Heart right ventricle (tissue), 16 donors: ENCODE measurements at regions of chr12 and their contacts with region 1.

Region 1: DNA sequence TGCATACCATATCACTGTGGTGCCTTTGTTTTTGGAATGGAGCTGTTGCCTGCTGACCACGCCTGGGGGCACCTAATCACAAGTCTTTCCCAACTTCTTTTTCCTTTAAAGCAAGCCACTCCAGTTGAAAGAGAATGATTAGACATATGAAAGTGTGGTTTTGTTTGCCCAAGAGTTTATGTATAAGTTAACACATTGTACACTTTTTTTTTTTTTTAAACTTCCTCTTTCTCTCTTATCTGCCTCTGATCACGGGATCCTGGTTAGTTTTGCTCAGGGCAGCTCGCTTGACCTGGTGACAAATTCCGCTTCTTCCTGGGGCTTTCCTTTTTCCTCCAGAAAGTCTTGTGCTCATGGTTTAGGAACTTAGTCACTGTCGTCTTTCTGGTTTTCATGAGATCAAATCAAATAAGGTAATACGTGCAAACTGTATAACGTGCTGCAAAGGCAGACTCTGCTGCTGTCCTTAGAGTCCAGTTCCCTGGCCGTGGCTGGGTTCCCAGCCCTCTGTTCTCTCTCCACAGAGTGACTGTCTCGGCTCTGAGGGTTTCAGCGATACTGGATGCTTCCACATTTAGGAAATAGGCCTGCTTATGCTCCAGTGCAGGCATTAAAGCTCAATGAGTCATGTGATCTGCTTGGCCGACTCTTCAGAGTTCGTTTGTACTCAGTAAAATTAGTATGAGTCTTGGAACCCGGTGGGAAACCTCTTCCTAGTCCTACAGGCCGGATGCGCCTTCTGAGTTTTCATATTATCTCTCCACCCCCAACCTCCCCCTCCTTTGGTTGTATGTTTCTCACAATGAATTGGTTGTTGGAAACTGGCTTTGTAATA is 15.2 kb downstream of the RASSF3 start:
- DNase-seq: peak; percentile 52 to 81
- ATAC-seq: peak; percentile 90 to 97 (median 94)
- H3K4me3 ChIP-seq: peak overlapping the region in 9 of 10 donors; percentile 4 to 49 (median 38)
- H3K27ac ChIP-seq: peak overlapping the region; percentile 9 to 91 (median 82)
- H3K4me1 ChIP-seq: peaks cover 10 to 85% (median 56%) of the 10 kb centered on the region in 9 donors
- H3K27me3 ChIP-seq: no peaks in the 10 kb centered on the region
- CTCF ChIP-seq: peak in 1 of 9 donors; percentile 20

Region 2: GRCh38 chr12:64679487-64679983 is 54.1 kb after region 1 on chr12:
- intact Hi-C with region 1: loop called in 3 of 10 experiments (anchors 5 kb)
- DNase-seq: peak; percentile 68 to 69
- ATAC-seq: peak in 7 of 8 donors; percentile 24 to 58 (median 46)
- H3K4me3 ChIP-seq: peak overlapping the region in 6 of 10 donors; percentile 4 to 26 (median 12)
- H3K27ac ChIP-seq: peak overlapping the region; percentile 2 to 89 (median 82)
- H3K4me1 ChIP-seq: peaks cover 17 to 100% (median 81%) of the 10 kb centered on the region in 9 donors
- H3K27me3 ChIP-seq: no peaks in the 10 kb centered on the region
- CTCF ChIP-seq: no peak